Left ventricle myocardium superior (tissue), 1 donor: ENCODE measurements at regions of chr9 and their contacts with region 1.

Region 1: DNA sequence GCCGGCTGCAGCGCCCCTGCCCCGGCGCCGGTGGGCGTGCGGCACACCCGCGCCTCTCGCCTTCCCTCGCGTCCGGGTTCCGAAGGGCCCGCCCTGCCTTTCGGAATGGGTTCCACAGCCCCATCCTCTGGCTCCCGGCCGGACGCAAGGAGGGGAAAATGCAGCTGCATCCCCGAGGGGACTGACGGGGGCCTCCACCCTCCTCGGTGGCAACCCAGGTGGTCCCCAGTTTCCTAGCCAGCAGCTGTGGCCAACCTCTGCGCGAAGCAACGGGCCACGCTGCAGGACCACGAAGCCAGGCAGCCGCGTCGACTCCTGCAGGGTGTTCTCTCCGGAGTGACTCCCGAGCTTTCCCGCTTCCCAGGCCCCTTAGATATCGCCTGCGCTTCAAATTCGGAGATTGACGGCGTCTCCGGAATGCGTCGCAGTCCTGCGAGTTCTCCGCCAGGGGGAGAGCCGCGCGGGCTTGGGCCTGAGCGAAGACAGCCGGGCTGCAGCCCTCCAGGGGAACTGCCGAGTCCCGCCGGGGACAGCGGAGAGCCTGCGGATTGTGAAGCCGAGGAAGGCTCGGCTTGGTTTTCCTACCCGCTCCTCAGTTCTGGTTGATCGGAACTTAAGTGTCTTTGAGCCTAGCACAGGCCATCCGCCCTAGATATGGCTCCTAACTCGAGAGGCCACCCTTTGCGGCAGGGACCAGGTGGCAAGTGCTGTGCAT is 582 bp upstream of the APBA1 start:
- DNase-seq: peak; percentile 90
- ATAC-seq: peak; percentile 90

Region 2: DNA sequence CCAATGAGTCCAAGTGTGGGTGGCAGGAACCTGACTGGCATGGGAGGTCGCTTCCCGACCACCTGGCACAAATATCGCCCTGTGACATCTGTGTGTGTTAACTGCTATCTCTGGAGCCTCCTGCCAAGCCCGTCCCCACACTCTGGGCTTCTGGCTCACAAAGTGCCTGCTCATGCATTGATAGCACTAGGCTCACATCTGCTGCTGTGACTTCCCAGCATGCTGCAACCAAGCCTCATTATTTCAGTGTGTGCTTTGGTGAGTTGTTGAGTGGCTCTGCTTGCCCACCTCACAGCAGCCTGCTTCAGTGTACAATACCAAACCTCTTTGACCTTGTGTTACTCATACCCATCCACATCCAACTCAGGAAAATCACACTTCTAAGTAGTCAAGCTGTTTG is 140.4 kb before region 1 on chr9:
- intact Hi-C with region 1: no loop called
- DNase-seq: no peak
- ATAC-seq: no peak

Region 3: GRCh38 chr9:69759421-69760277 is 86.9 kb after region 1 on chr9 and contains the start of gene PTAR1:
- intact Hi-C with region 1: loop called (anchors 10 kb)
- DNase-seq: peak; percentile 97
- ATAC-seq: peak; percentile 98
- total RNA-seq, gene PTAR1: 24.9 TPM